ENCODE measurements at regions of chr17 and their contacts with region 1.

Region 1: GRCh38 chr17:76182016-76182764 is 41.1 kb upstream of the FOXJ1 start:
- DNase-seq: peak; percentile 78 to 94 (median 86)
- H3K4me3 ChIP-seq: peak overlapping the region in 2 of 59 donors; percentile 11 to 25
- H3K27ac ChIP-seq: peak overlapping the region in 6 of 59 donors; percentile 12 to 69 (median 41)
- H3K27me3 ChIP-seq: no peaks in the 10 kb centered on the region
- CTCF ChIP-seq: peak; percentile 66 to 95 (median 88)

Region 2: GRCh38 chr17:76111956-76112355 is 70.2 kb before region 1 on chr17:
- intact Hi-C with region 1: no loop called
- DNase-seq: no peak
- H3K4me3 ChIP-seq: no peak overlapping the region
- H3K27ac ChIP-seq: no peak overlapping the region
- H3K27me3 ChIP-seq: no peaks in the 10 kb centered on the region
- CTCF ChIP-seq: no peak

Region 3: GRCh38 chr17:76121932-76122430 is 60.2 kb before region 1 on chr17:
- intact Hi-C with region 1: loop called in 1 of 2 experiments (anchors 2 kb)
- DNase-seq: peak in 2 of 10 donors; percentile 26 to 58
- H3K4me3 ChIP-seq: peak overlapping the region; percentile 22 to 69 (median 55)
- H3K27ac ChIP-seq: peak overlapping the region in 19 of 59 donors; percentile 3 to 78 (median 41)
- H3K27me3 ChIP-seq: no peaks in the 10 kb centered on the region
- CTCF ChIP-seq: no peak

Region 4: DNA sequence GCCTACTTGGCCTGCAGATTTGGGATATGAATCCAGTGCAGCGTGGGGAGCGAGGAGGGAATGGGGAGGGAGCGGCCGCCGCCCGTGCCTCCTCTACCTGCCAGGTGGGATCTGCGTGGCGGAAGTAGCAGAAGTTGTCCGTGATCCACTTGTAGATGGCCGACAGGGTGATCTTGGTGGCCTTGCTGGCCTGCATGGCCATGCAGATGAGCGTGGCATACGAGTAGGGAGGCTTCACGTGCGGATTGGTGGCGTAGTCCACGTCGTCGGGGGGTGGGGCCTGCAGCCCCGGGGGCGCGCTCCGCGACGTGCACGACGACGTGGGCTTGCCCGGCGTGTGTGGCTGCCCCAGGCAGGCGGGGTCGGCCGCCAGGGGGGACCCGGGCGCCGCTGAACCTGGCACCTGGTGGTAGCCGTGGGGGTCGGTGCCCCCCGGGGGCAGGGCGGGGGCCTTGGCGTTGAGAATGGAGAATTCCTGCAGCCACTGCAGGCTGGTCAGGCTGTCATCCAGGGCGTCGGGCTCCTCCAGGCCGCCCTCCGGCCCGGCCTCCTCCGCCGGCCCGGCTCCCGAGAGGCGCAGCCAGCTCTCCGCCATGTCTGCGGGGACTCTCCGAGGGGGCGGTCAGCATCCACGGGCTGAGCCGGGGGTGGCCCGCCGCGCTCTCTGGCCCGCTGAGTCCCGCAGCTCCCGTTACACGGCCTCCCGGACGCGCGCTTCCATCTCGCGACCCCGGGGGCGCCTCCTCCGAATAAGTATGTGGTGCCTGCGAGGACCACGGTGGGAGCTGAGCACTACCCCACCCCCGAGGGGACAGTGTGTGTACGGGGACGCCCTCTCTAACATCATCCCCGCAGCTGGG is 42.2 kb before region 1 on chr17:
- intact Hi-C with region 1: loop called in 1 of 2 experiments (anchors 5 kb)
- DNase-seq: no peak
- H3K4me3 ChIP-seq: peak overlapping the region in 37 of 59 donors; percentile 4 to 71 (median 56)
- H3K27ac ChIP-seq: no peak overlapping the region
- H3K27me3 ChIP-seq: peaks cover 0 to 48% (median 25%) of the 10 kb centered on the region in 45 donors
- CTCF ChIP-seq: no peak

Region 5: DNA sequence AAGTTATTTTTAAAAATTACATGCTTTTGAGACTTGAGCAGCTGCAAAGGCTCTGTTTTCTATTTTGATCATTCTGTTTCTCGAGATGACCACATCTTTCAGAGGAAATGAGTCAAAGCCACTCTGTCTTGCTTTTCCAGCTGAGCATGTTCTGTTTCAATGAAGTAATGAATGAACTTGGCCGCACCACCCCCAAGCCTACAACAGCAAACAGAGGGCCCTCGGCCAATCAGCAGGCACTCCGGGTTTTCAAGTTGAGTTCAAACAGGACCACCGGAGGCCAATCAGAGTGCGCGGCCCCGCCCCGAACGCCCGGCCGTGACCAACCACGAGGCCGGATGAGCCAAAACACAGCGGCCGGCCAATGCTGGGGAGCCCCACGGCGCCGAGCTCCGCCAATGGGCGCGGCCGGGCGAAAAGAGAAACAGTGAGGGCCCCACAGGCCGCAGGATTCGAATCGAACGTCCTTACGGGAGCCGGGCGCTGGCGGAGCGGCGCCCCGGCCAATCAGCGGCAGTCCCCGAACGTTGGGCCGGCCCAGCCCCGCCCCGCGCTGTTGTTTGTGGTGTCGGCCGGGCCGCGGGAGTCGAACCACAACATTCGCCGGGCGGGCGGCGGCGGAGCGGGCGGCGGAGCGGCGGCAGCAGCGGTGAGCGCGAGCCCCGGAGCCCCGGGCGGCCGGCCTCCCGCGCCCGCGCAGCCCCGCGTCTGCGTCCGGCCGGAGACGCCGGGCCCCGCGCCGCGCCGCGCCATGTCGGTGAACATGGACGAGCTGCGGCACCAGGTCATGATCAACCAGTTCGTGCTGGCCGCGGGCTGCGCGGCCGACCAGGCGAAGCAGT is 82.8 kb after region 1 on chr17 and contains the start of gene UBALD2:
- intact Hi-C with region 1: loop called in 1 of 2 experiments (anchors 5 kb)
- DNase-seq: peak; percentile 99 to 100 (median 100)
- H3K4me3 ChIP-seq: peak within 1 kb of the TSS; percentile 69 to 98 (median 87)
- H3K27ac ChIP-seq: peak within 1 kb of the TSS; percentile 49 to 96 (median 89)
- H3K27me3 ChIP-seq: no peaks in the 10 kb centered on the region
- CTCF ChIP-seq: peak in 22 of 56 donors; percentile 4 to 50 (median 20)
- total RNA-seq, gene UBALD2: 23.4 to 76.2 (median 37.1) TPM

Region 6: GRCh38 chr17:76278952-76279741 is 97.0 kb after region 1 on chr17:
- intact Hi-C with region 1: loop called in 1 of 2 experiments (anchors 5 kb)
- DNase-seq: peak; percentile 84 to 93 (median 89)
- H3K4me3 ChIP-seq: no peak overlapping the region
- H3K27ac ChIP-seq: peak overlapping the region in 1 of 59 donors; percentile 34
- H3K27me3 ChIP-seq: no peaks in the 10 kb centered on the region
- CTCF ChIP-seq: peak; percentile 86 to 100 (median 98)